WTC11 (cell line): ENCODE measurements at regions of chr3 and their contacts with region 1.

Region 1: DNA sequence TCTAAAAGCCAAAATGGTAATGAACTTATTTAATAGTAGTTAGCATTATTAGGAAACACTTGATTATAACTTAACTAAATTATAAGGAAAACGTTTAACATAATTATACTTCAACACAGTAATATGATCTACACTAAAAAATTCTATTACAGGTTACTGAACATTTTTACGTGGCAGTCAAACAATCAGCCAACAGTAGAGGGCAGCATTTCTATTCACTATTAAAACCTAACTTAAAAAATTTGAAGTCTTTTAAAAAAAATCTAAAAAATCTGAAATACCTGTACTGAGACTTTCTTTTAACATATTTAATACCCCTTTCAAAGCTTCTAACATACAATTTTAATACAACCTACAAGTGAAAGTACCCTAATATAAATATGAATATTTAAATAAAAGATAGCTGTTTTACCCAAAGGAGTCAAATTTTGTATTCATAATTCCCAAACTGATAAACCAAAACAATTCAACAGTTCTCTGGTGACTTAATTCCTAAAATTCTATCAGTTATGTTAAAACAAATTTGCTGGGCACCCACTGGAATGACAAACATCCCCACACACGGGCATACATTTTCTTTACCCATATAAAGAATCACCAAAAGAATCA is 41.5 kb downstream of the DLG1 start:
- DNase-seq: no peak
- ATAC-seq: no peak
- H3K4me3 Mint-ChIP-seq: no peak overlapping the region
- H3K27ac Mint-ChIP-seq: no peak overlapping the region
- H3K4me1 Mint-ChIP-seq: peaks cover 34% of the 10 kb centered on the region
- H3K27me3 Mint-ChIP-seq: no peaks in the 10 kb centered on the region
- CTCF ChIP-seq: peak; percentile 35

Region 2: DNA sequence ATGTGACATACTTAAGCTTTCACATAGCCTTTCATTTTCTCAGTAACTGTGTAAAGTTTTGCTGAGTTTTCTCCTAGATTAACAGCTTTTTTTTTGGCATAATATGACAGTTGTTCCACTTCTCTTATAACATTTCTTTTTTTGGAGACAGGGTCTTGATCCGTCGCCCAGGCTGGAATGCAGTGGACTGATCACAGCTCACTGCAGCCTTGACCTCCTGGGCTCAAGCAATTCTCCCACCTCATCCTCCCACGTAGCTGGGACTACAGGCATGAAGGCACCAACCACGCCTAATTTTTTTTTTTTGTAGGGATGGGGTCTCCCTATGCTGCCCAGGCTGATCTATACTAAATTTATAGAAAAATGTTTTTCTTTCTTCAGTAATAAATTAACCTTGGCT is 11.4 kb after region 1 on chr3:
- CTCF ChIA-PET with region 1: interaction called, 17 read pairs
- POLR2A ChIA-PET with region 1: no interaction called
- DNase-seq: no peak
- ATAC-seq: no peak
- H3K4me3 Mint-ChIP-seq: no peak overlapping the region
- H3K27ac Mint-ChIP-seq: no peak overlapping the region
- H3K4me1 Mint-ChIP-seq: peaks cover 20% of the 10 kb centered on the region
- H3K27me3 Mint-ChIP-seq: no peaks in the 10 kb centered on the region
- CTCF ChIP-seq: no peak

Region 3: GRCh38 chr3:197501879-197502620 is 245.1 kb after region 1 on chr3:
- CTCF ChIA-PET with region 1: interaction called, 30 read pairs
- POLR2A ChIA-PET with region 1: no interaction called
- DNase-seq: peak; percentile 81
- ATAC-seq: peak; percentile 93
- H3K4me3 Mint-ChIP-seq: no peak overlapping the region
- H3K27ac Mint-ChIP-seq: no peak overlapping the region
- H3K4me1 Mint-ChIP-seq: no peaks in the 10 kb centered on the region
- H3K27me3 Mint-ChIP-seq: peaks cover 7% of the 10 kb centered on the region
- CTCF ChIP-seq: peak; percentile 65